Endothelial cell of umbilical vein (primary cell): ENCODE measurements at regions of chr7 and their contacts with region 1.

Region 1: DNA sequence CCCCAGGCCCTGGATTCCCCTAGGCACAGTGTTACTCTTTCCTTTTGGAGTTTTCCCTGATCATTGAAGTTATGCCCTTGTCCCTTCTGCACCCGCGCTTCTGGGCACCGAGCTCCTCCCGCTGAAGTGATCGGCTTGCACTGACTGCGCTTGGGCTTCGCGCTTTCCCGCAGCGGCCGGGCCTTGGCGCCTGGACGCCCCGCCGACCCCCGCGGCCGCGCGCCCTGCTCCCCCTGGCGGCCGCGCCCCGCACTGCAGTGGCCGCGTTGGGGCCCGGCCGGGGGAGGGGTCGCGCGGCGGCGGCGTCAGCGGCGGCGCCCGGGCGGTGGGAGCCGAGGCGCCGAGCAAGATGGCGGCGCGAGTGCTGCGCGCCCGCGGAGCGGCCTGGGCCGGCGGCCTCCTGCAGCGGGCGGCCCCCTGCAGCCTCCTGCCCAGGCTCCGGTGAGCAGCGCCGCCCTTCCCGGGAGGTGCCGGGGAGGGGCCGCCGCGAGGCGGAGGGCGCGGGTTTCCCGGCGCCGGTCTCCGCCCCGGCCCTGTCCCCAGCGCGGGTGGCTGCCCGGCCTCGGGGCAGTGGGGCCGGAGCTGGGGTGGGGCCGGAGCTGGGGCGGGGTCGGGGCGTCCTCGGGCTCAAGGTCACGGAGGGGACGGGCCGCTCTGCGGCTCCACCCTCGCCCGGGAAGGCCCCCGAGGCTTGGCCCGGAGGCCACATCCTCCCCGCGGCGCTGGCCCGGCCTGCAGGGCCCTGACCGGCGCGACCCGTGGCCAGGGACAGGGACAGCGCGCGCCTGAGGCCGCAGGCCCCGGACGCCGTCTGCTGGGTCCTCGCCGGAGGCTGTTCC is at the start of gene NIPSNAP2:
- DNase-seq: peak; percentile 56
- H3K4me3 ChIP-seq: peak within 1 kb of the TSS; percentile 68 to 80 (median 77)
- H3K27ac ChIP-seq: peak within 1 kb of the TSS; percentile 64
- H3K4me1 ChIP-seq: no peaks in the 10 kb centered on the region
- H3K27me3 ChIP-seq: no peaks in the 10 kb centered on the region
- CTCF ChIP-seq: peak; percentile 19 to 58
- POLR2A ChIP-seq: peak; percentile 78
- total RNA-seq, gene NIPSNAP2: 50.5 and 53.6 TPM in 2 replicates

Region 2: GRCh38 chr7:55572378-55573233 is 391.9 kb before region 1 on chr7 and contains the start of gene VOPP1:
- CTCF ChIA-PET with region 1: interaction called, 3 read pairs
- POLR2A ChIA-PET with region 1: no interaction called
- dilution Hi-C with region 1: no loop called
- intact Hi-C with region 1: loop called (anchors 10 kb)
- DNase-seq: peak; percentile 61
- H3K4me3 ChIP-seq: peak within 1 kb of the TSS; percentile 89 to 99 (median 97)
- H3K27ac ChIP-seq: peak within 1 kb of the TSS; percentile 97
- H3K4me1 ChIP-seq: peaks cover 55% of the 10 kb centered on the region
- H3K27me3 ChIP-seq: no peaks in the 10 kb centered on the region
- CTCF ChIP-seq: no peak
- POLR2A ChIP-seq: peak; percentile 41
- total RNA-seq, gene VOPP1: 154 and 159 TPM in 2 replicates

Region 3: DNA sequence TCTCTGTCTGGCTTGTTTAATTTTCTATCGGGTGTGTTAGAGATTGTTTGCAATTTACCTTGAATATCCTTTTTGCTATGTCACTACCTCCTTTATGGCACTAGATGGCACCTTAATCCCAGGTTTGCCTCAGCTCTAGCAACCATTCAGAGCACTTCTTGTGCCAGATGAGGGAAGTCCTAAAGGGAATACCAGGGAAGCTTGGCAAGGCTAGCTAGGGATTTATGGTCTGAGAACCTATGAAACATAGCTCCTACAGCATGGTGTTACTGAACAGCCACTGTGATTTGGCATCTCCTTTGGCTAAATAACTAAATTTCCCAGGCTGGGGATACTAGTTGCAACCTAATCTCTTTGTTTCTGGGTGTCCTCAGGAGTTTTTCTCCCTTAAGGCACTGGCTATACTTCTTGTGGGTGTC is 323.2 kb before region 1 on chr7:
- CTCF ChIA-PET with region 1: interaction called, 52 read pairs
- POLR2A ChIA-PET with region 1: no interaction called
- dilution Hi-C with region 1: no loop called
- intact Hi-C with region 1: loop called (anchors 1 kb)
- DNase-seq: peak; percentile 83
- H3K4me3 ChIP-seq: no peak overlapping the region
- H3K27ac ChIP-seq: no peak overlapping the region
- H3K4me1 ChIP-seq: peaks cover 6% of the 10 kb centered on the region
- H3K27me3 ChIP-seq: peaks cover 0 to 3% of the 10 kb centered on the region in 2 experiments
- CTCF ChIP-seq: peak; percentile 53 to 63
- POLR2A ChIP-seq: no peak

Region 4: DNA sequence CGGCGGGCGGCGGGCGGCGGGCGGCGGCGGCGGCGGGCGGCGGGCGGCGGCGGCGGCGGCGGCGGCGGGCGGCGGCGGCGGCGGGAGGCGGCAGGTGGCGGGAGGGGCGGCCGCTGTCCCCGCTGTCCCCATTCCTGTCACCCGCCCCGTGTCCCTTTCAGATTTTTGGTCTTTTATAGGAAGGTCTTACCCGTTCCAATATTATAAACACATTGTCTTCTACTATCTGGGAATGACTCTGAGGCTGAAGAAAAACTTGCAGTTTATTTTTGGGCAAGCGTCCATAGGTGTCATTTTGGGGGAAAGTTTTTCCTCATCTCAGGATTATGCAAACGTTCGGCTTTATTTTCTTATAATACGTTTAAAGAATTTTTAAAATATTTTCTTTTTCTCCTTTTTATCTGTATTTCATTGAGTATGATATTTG is 76.6 kb before region 1 on chr7:
- CTCF ChIA-PET with region 1: interaction called, 3 read pairs
- POLR2A ChIA-PET with region 1: no interaction called
- dilution Hi-C with region 1: no loop called
- intact Hi-C with region 1: loop called (anchors 1 kb)
- DNase-seq: no peak
- H3K4me3 ChIP-seq: peak overlapping the region; percentile 59 to 94 (median 90)
- H3K27ac ChIP-seq: peak overlapping the region; percentile 60
- H3K4me1 ChIP-seq: peaks cover 2% of the 10 kb centered on the region
- H3K27me3 ChIP-seq: no peaks in the 10 kb centered on the region
- CTCF ChIP-seq: no peak
- POLR2A ChIP-seq: no peak

Region 5: DNA sequence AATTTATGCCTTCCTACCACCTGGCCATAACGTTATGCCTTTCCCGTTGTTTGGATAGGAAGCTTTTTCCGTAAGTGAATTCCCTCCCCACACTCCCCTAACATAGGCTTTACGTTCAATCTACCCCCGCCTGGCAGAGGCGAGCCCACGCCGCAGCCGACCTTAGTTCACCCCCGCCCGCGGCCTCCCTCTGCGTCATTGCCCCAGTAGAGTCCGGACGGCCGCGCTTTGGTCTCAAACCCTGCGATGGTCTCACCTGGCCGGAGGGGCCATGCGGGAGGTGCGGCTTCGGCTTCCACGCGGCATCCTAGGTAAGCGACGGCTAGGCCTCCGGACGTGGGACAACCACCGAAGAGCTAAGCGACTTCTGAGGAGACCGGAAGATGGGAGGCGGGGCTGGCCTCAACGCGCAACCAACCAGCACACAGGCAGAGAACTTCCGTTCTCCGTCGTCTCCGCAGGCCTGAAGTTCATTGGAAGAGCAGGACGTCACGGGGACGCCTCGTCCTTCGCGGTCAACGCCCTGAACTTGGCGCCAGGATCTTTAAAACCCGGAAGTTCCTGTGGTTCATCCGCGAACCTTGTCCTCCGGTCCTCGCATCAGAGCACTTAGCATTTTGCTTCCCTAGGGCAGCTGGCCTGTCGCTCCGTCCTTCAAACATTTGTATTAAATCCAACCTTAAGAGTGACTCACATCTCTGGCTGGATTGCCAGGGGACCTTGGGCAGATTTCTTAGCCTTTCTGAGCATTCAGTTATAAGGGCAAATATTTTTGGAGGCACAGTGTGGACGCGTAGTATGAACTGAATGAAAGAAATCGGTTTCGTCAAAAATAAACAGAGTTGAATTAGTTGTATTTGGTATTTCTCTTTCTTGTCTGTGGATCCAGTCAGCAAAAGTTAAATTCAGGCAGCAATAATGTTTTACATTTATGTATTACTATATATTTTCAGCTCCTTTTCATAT is 141.9 kb after region 1 on chr7 and contains the start of gene CHCHD2:
- CTCF ChIA-PET with region 1: no interaction called
- POLR2A ChIA-PET with region 1: no interaction called
- dilution Hi-C with region 1: no loop called
- intact Hi-C with region 1: loop called (anchors 1 kb)
- DNase-seq: peak; percentile 98
- H3K4me3 ChIP-seq: peak within 1 kb of the TSS; percentile 54 to 87 (median 86)
- H3K27ac ChIP-seq: peak within 1 kb of the TSS; percentile 77
- H3K4me1 ChIP-seq: peaks cover 4% of the 10 kb centered on the region
- H3K27me3 ChIP-seq: no peaks in the 10 kb centered on the region
- CTCF ChIP-seq: no peak
- POLR2A ChIP-seq: peak; percentile 70
- total RNA-seq, gene CHCHD2: 368 and 378 TPM in 2 replicates